Activated CD4-positive, alpha-beta T cell treated with anti-CD3 and anti-CD28 coated beads for 36 hours (primary cell): ENCODE measurements at regions of chr18 and their contacts with region 1.

Region 1: DNA sequence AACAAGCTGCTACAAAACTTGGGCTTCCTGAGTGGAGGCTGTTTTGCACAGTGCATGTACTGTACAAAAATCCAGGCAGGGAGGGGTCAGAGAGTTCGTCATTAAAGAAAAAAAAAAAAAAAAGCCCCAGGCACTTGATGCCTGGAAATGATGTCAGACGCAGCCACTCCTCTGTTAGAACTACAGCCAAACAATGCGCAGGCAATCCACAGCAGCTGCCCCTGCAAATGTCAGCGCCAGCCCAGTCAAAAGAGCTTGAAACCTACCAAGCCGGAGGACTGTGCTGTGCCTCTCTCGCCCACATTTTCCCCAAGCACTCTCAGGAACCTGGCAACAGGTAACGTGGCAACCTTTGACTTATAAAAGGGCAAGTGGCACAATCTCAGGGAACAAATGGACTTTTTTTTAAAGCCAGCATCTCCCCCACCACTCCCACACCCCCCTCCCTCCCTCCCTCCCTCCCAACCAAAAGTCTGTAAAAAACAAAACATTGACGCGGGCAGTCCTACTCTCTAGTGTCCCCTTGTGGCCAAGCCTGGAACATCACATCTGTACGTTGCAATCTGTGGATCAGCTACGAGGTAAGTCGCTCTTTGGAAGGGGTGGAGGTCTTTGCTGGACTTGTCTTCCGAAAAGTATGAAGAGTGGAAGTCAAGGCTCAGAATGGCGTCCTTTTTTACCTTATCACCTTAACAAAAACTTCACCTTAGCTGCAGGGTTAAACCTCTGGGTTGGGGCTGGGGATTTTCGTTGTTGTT is 144.1 kb downstream of the TGIF1 start:
- DNase-seq: peak; percentile 92
- ATAC-seq: peak; percentile 81
- H3K4me3 Mint-ChIP-seq: peak overlapping the region; percentile 92
- H3K27ac Mint-ChIP-seq: peak overlapping the region; percentile 99
- H3K4me1 Mint-ChIP-seq: peaks cover 58% of the 10 kb centered on the region
- H3K27me3 Mint-ChIP-seq: no peaks in the 10 kb centered on the region

Region 2: GRCh38 chr18:2889761-2890192 is 704.3 kb before region 1 on chr18:
- CTCF ChIA-PET with region 1: no interaction called
- POLR2A ChIA-PET with region 1: no interaction called
- intact Hi-C with region 1: no loop called
- DNase-seq: no peak
- ATAC-seq: peak; percentile 55
- H3K4me3 Mint-ChIP-seq: no peak overlapping the region
- H3K27ac Mint-ChIP-seq: peak overlapping the region; percentile 38
- H3K4me1 Mint-ChIP-seq: peaks cover 31% of the 10 kb centered on the region
- H3K27me3 Mint-ChIP-seq: no peaks in the 10 kb centered on the region

Region 3: DNA sequence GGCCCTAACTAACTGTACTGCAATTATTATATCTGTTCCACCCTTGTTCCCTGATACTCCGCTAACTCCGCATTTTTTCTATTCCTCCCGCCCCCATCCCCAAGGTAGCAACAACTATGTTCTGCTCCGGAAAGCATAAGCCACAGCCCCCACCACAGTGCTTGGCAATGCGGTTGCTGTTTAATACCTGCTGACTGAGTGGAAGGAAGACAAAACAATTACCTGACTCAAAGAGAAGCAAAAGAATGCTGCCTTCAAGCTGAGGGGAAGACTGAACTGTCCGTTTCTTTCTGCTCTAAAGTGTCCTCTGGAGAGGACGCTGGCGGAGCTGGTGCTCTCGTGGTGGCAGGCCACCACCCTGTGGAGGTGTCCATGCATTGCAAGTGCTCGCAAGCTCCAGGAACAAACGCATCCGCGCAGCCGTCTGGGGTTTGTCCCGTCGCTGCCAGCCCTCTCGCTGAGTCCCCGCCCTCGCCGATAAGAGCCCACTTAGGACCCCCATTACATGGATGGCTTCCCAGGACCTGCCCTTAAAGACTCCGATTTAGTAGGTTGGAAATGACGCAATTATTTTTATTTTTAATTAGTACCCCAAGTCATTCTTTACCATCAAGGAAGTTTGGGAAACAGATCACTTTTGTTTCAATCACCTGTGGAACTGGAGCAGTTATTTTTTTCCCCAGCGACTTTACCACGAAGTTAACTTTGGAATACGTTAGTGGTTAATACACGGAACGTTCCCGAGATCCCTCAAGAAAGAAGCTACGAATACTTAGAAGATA is 348.0 kb before region 1 on chr18:
- CTCF ChIA-PET with region 1: interaction called, 8 read pairs
- POLR2A ChIA-PET with region 1: no interaction called
- intact Hi-C with region 1: loop called in 1 of 2 experiments (anchors 1 kb)
- DNase-seq: peak; percentile 92
- ATAC-seq: peak; percentile 55
- H3K4me3 Mint-ChIP-seq: peak overlapping the region; percentile 76
- H3K27ac Mint-ChIP-seq: peak overlapping the region; percentile 97
- H3K4me1 Mint-ChIP-seq: peaks cover 26% of the 10 kb centered on the region
- H3K27me3 Mint-ChIP-seq: no peaks in the 10 kb centered on the region

Region 4: GRCh38 chr18:3297025-3297984 is 296.8 kb before region 1 on chr18:
- CTCF ChIA-PET with region 1: interaction called, 18 read pairs
- POLR2A ChIA-PET with region 1: interaction called, 6 read pairs
- intact Hi-C with region 1: loop called (anchors 2 to 5 kb)
- DNase-seq: peak; percentile 97
- ATAC-seq: peak; percentile 97
- H3K4me3 Mint-ChIP-seq: peak overlapping the region; percentile 87
- H3K27ac Mint-ChIP-seq: peak overlapping the region; percentile 78
- H3K4me1 Mint-ChIP-seq: peaks cover 2% of the 10 kb centered on the region
- H3K27me3 Mint-ChIP-seq: peaks cover 22% of the 10 kb centered on the region

Region 5: DNA sequence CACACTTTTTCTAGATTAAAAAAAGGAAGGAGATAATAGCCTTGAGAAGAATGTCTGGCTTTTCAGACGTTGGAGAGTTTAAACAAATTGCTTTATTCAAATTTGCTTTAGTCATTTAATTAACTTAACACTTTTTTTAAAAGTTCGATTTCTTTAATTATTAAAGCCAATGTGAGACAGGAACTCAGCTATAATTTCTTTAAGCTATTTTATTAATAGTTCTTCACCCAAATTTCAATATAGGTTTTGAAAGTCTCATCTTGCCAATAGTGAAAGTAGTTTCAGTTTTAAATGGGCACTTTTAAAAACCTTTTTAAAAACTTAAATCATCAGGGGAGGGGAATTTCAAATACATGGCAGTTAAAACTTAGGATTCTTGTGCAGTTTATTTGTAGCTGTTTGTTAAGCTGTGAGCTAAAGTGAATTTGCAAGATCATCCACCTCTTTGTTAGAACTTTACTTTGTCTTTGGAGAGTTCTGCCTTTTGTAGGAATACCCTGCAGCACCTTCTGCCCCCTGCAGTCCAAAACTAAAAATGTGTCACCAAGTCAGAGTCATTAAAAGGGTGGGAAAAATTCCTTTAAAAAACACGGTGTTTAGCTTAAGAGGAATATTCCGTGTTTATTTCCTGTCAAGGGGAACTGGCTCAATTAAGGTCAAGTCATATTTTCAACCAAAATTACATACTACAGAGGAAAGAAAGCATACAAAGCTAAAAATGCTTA is 139.6 kb before region 1 on chr18:
- CTCF ChIA-PET with region 1: interaction called, 54 read pairs
- POLR2A ChIA-PET with region 1: interaction called, 58 read pairs
- intact Hi-C with region 1: loop called in 1 of 2 experiments (anchors 1 kb)
- DNase-seq: peak; percentile 40
- ATAC-seq: no peak
- H3K4me3 Mint-ChIP-seq: peak overlapping the region; percentile 94
- H3K27ac Mint-ChIP-seq: peak overlapping the region; percentile 99
- H3K4me1 Mint-ChIP-seq: peaks cover 67% of the 10 kb centered on the region
- H3K27me3 Mint-ChIP-seq: no peaks in the 10 kb centered on the region

Region 6: GRCh38 chr18:3541549-3542386 is 52.3 kb before region 1 on chr18:
- CTCF ChIA-PET with region 1: interaction called, 6 read pairs
- POLR2A ChIA-PET with region 1: no interaction called
- intact Hi-C with region 1: loop called in 1 of 2 experiments (anchors 1 kb)
- DNase-seq: peak; percentile 65
- ATAC-seq: peak; percentile 96
- H3K4me3 Mint-ChIP-seq: peak overlapping the region; percentile 16
- H3K27ac Mint-ChIP-seq: peak overlapping the region; percentile 74
- H3K4me1 Mint-ChIP-seq: peaks cover 32% of the 10 kb centered on the region
- H3K27me3 Mint-ChIP-seq: peaks cover 2% of the 10 kb centered on the region

Region 7: GRCh38 chr18:3645384-3646156 is 51.5 kb after region 1 on chr18:
- CTCF ChIA-PET with region 1: interaction called, 9 read pairs
- POLR2A ChIA-PET with region 1: interaction called, 10 read pairs
- intact Hi-C with region 1: loop called (anchors 1 kb)
- DNase-seq: no peak
- ATAC-seq: no peak
- H3K4me3 Mint-ChIP-seq: no peak overlapping the region
- H3K27ac Mint-ChIP-seq: no peak overlapping the region
- H3K4me1 Mint-ChIP-seq: peaks cover 40% of the 10 kb centered on the region
- H3K27me3 Mint-ChIP-seq: no peaks in the 10 kb centered on the region

Region 8: GRCh38 chr18:5295981-5296705 is 1702.1 kb after region 1 on chr18:
- CTCF ChIA-PET with region 1: no interaction called
- POLR2A ChIA-PET with region 1: no interaction called
- intact Hi-C with region 1: loop called in 1 of 2 experiments (anchors 10 kb)
- DNase-seq: peak; percentile 96
- ATAC-seq: peak; percentile 64
- H3K4me3 Mint-ChIP-seq: peak overlapping the region; percentile 89
- H3K27ac Mint-ChIP-seq: peak overlapping the region; percentile 98
- H3K4me1 Mint-ChIP-seq: peaks cover 34% of the 10 kb centered on the region
- H3K27me3 Mint-ChIP-seq: peaks cover under 1% of the 10 kb centered on the region